ENCODE measurements at regions of chr6 and their contacts with region 1.

Region 1: GRCh38 chr6:46090115-46091079 is 39.4 kb upstream of the ENPP4 start:
- DNase-seq: peak; percentile 83
- H3K4me3 Mint-ChIP-seq: no peak overlapping the region
- H3K27ac Mint-ChIP-seq: no peak overlapping the region
- H3K4me1 Mint-ChIP-seq: peaks cover 2% of the 10 kb centered on the region
- H3K27me3 Mint-ChIP-seq: peaks cover 30% of the 10 kb centered on the region

Region 2: GRCh38 chr6:45930420-45931040 is 159.9 kb before region 1 on chr6:
- intact Hi-C with region 1: loop called (anchors 5 kb)
- DNase-seq: peak; percentile 86
- H3K4me3 Mint-ChIP-seq: no peak overlapping the region
- H3K27ac Mint-ChIP-seq: no peak overlapping the region
- H3K4me1 Mint-ChIP-seq: peaks cover 7% of the 10 kb centered on the region
- H3K27me3 Mint-ChIP-seq: no peaks in the 10 kb centered on the region

Region 3: DNA sequence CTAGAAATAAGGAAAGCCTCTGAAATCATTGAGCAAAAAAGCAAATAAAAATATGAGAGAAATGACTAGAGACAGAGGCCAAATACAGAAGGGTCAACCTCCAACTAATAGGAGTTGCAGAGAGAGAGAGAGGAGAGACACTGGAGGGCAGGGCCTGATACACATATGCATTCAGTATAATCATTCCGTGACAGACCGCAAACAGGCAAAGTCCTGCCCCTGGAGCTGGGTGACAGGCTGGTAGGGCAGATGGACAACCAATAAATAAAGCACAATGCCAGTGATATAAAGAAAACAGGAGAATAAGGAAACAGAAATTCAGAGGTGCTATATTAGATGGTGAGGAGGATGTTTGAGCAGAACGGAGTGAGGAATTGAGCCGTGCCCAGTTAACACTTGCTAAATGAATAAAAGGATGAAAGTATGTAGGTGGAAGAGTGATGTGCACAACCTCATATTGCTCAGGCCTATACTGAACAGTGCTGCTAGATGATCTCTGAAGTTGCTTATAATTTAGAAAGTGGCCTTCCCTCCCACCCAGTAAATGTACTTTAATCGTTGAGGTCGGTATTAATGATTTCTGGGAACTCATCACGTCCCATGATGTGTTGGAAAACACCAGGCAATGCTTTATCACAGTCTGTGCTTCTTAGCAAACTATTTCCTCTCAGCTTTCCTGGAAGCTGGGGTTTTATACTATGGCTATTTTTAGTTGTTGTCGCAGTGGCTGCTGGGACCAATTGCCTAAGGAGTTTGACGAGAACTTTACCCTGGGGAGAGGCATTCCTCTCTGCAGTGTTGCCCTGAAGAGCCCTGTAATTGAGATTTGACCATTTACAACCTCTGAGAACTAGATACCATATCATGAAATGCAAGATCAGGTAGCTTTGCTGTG is 37.1 kb before region 1 on chr6:
- intact Hi-C with region 1: no loop called
- DNase-seq: no peak
- H3K4me3 Mint-ChIP-seq: peak overlapping the region; percentile 1
- H3K27ac Mint-ChIP-seq: no peak overlapping the region
- H3K4me1 Mint-ChIP-seq: peaks cover 12% of the 10 kb centered on the region
- H3K27me3 Mint-ChIP-seq: peaks cover 11% of the 10 kb centered on the region

Region 4: GRCh38 chr6:46221222-46221793 is 130.9 kb after region 1 on chr6:
- intact Hi-C with region 1: loop called (anchors 1 kb)
- DNase-seq: peak; percentile 66
- H3K4me3 Mint-ChIP-seq: no peak overlapping the region
- H3K27ac Mint-ChIP-seq: no peak overlapping the region
- H3K4me1 Mint-ChIP-seq: no peaks in the 10 kb centered on the region
- H3K27me3 Mint-ChIP-seq: peaks cover 4% of the 10 kb centered on the region

Region 5: DNA sequence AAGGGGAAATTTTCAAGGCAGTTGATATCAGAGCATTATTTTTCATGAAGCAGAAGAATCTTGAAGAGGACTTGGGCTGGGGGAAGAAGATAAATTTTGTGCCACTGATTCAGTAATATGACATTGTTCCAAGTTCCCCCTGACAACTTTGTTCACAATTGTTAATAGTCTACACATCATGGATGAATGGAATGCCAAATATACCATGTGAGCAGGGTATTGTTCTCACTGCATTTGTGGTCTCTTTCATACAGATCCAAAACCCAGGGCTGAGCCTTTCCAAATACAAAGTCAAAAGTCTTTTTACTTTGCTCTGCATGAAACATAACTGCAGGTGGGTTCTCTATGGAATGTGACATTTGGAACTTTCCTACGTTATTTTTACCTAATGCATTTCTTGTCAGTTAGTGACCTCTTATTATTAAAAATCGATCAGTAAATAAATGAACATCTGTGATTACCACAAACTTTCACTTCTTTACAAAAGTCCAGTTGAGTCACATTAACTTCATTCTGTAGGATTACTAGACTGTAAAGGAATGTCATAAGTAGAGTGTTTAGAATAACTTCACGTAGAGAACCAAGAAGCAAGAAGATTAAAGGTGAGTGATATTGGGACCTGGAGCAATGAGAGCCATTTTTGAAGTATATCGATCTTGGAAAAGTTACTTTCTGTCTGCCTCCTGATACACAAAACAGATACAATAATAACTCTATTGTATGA is 299.9 kb after region 1 on chr6:
- intact Hi-C with region 1: no loop called
- DNase-seq: no peak
- H3K4me3 Mint-ChIP-seq: no peak overlapping the region
- H3K27ac Mint-ChIP-seq: no peak overlapping the region
- H3K4me1 Mint-ChIP-seq: no peaks in the 10 kb centered on the region
- H3K27me3 Mint-ChIP-seq: peaks cover 16% of the 10 kb centered on the region

Region 6: DNA sequence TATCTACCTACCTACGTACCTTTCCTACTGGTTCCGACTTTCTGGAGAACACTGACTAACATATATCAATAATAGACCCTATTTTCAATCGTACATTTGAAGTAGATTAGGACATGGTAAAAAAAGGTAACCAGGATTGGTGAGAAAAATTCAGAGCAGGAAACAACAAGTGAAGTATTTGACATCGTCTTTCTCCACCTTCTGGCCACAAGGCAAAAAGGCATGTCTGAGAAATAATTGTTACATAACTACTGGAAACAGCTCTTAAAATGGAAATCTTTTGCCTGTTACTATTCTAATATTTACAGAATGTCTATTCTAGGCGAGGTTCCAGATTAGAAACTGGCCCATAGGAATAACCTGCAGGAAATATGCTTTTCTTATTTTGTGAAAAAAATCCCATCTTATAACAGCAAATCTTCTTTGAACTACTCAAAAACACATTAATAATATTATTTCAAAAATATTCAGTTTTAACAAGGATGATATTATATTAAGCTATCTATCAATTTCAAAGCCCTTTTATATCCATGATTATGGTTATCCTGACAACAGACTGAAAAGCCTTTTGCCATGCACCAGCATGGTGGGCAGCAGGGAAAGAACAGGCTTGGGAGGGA is 320.0 kb after region 1 on chr6:
- intact Hi-C with region 1: loop called (anchors 1 kb)
- DNase-seq: peak; percentile 68
- H3K4me3 Mint-ChIP-seq: no peak overlapping the region
- H3K27ac Mint-ChIP-seq: no peak overlapping the region
- H3K4me1 Mint-ChIP-seq: no peaks in the 10 kb centered on the region
- H3K27me3 Mint-ChIP-seq: peaks cover 5% of the 10 kb centered on the region

Region 7: DNA sequence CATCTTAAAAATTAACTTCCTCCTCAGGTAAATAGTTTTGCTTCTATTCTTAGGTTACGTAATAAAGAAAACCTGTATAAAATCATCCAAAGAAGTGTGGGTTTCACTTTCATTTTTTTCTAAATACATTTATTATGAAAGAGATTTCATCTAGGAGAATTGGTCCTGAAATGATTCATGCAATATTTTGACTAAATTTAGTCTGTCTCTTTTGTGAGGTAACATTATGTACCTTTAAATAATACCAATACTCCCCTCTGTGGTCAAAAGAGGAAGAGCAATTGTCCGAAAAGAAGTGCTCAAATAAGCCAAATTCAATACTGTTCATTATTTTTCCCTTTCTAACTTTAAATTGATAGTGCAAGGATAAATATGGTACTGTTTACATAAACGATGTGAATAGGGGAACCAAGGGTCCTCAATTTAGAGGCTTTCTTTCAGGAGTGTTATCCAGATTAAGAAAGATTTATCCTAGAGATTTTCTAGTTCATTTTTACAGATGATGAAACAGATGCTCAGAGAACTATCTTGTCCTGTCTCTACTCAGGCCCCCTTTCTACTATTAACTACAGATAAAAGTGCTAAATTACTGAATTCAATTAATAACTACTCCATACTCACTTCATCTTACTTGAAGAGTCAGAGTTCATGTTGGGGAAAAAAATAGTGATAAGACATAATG is 536.0 kb after region 1 on chr6:
- intact Hi-C with region 1: loop called (anchors 1 kb)
- DNase-seq: no peak
- H3K4me3 Mint-ChIP-seq: no peak overlapping the region
- H3K27ac Mint-ChIP-seq: no peak overlapping the region
- H3K4me1 Mint-ChIP-seq: peaks cover 3% of the 10 kb centered on the region
- H3K27me3 Mint-ChIP-seq: peaks cover 29% of the 10 kb centered on the region